GM13976 (cell line): ENCODE measurements at regions of chr4 and their contacts with region 1.

Region 1: DNA sequence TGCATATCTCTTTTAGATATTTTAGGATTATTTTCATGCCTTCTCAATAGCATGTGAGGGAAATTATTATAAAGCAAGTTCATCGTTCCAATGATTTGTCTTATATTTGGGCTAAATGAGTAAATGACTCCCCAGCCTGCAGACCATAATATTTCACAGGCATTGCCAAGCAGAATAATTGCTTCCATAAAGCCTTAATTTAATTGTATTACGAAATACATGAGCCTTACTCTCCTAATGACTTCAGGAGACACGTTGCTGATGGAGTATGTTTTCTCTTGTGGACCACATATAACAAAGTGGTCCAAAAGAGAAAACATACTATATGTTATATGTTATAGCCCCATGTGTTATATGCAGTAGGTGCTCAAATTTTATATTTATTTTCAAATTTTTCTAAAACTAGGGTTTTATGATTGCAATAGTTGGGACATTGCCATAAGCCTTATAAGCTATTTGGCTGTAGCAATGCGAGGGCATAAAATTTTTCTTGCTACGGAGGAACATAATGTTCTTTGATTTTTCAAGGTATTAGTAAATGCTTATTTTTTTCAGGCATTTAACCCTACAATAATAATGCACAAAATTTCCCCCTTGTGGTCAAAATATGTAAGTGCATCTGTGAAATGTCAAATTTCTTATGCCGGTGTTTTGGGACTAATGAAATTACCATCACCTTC is 26.2 kb upstream of the TMPRSS11D start:
- DNase-seq: no peak
- CTCF ChIP-seq: peak; percentile 22

Region 2: DNA sequence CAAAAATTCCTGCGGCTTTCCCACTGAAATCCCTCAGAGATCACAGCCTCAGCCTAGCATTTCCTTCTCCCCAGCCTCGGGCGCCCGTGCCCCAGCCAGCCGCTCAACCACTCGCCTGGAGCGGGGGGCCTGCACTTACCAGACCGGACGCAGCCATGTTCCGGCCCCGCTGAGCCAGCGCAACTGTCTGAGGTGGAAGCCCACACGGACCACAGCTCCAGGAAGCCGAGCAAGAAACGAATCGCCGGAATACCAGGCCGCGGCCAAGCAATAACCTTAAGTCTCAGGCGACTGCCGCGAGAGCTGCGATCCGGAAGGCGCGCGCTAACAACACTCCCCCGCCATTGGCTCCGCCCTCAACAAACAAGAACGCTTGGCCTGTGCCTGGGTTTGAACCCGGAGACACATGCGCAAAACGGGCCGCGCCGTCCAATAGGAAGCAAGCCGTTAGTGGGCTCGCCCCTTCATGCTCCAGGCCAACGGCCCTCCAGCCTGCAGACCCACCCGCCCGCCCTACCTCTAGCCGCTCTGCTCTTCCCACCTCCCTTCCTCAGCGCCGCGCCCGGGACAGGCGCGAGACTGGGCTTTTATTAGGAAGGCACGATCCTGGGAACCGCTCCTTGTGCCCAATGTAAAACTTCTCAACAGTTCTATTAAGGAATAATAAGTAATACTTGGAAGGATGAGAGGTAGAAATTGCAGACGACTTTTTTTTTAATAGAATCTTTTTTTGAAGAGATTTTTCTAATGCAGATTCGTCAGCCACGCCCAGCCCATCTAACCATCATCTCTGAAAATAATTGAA is 364.6 kb before region 1 on chr4 and contains the start of gene CENPC:
- in situ Hi-C with region 1: loop called (anchors 25 kb)
- DNase-seq: peak; percentile 93
- CTCF ChIP-seq: no peak